Activated B cell treated with CpG ODN at 0.5 μM for 24 hours (primary cell): ENCODE measurements at regions of chr2 and their contacts with region 1.

Region 1: DNA sequence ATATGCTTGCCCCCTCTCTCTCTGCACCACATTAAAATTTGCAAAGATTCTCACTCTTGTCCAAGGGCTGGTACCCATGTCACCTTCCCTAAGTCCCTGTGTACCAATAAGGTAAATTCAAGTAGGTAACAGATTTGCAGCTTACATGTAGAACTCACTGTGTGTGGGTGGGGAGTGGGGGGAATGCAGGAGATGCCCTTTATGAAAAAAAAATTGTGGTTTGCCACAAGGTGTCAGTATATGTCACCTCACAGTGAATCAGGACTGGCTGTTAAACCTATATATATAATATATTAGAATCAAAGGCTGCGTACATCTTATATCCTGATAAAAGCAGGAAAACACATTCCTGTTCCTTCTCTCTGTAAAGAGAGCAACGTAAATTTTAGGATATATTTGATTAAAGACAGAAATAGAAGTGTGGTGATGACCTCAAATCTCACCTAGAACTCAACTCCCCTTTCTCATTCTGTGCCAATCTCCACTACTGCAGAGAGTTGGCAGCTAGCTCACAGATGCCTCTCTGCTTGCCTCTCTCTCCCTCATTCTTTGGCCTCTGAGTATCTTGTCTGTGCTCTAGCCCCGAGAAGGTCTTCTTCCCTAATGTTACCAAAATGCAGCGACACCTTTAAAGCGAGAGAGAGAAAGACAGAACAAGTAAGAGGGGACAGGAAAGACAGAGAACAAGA is 536 bp downstream of the XDH start:
- DNase-seq: no peak
- ATAC-seq: no peak
- H3K4me3 Mint-ChIP-seq: no peak overlapping the region
- H3K27ac Mint-ChIP-seq: no peak overlapping the region
- H3K4me1 Mint-ChIP-seq: no peaks in the 10 kb centered on the region
- H3K27me3 Mint-ChIP-seq: peaks cover 15% of the 10 kb centered on the region
- CTCF ChIP-seq: no peak

Region 2: GRCh38 chr2:31287654-31288053 is 126.4 kb before region 1 on chr2:
- CTCF ChIA-PET with region 1: no interaction called
- POLR2A ChIA-PET with region 1: no interaction called
- intact Hi-C with region 1: no loop called
- DNase-seq: no peak
- ATAC-seq: no peak
- H3K4me3 Mint-ChIP-seq: no peak overlapping the region
- H3K27ac Mint-ChIP-seq: no peak overlapping the region
- H3K4me1 Mint-ChIP-seq: peaks cover 5% of the 10 kb centered on the region
- H3K27me3 Mint-ChIP-seq: no peaks in the 10 kb centered on the region
- CTCF ChIP-seq: no peak

Region 3: GRCh38 chr2:31483246-31483645 is 69.2 kb after region 1 on chr2:
- CTCF ChIA-PET with region 1: no interaction called
- POLR2A ChIA-PET with region 1: no interaction called
- intact Hi-C with region 1: no loop called
- DNase-seq: no peak
- ATAC-seq: no peak
- H3K4me3 Mint-ChIP-seq: no peak overlapping the region
- H3K27ac Mint-ChIP-seq: no peak overlapping the region
- H3K4me1 Mint-ChIP-seq: no peaks in the 10 kb centered on the region
- H3K27me3 Mint-ChIP-seq: peaks cover 10% of the 10 kb centered on the region
- CTCF ChIP-seq: no peak

Region 4: DNA sequence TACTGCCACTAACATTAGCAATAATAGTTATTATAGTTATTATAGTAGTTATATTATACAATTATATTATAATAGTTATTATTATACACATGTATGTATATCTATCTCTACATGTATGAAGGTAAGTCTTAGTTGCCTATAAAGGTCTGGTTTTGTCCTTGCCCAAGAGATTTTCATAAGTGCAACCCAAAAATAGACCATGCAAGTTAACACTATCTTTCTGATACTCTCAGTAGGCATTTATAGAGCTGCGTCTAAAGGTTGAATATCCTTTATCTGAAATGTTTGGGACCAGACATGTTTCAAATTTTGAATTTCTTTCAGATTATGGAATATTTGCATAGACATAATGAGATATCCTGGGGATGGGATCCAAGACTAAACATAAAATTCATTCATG is 421.4 kb after region 1 on chr2:
- CTCF ChIA-PET with region 1: no interaction called
- POLR2A ChIA-PET with region 1: no interaction called
- intact Hi-C with region 1: loop called (anchors 5 kb)
- DNase-seq: no peak
- ATAC-seq: no peak
- H3K4me3 Mint-ChIP-seq: no peak overlapping the region
- H3K27ac Mint-ChIP-seq: no peak overlapping the region
- H3K4me1 Mint-ChIP-seq: no peaks in the 10 kb centered on the region
- H3K27me3 Mint-ChIP-seq: no peaks in the 10 kb centered on the region
- CTCF ChIP-seq: no peak